Activated CD4-positive, alpha-beta T cell treated with anti-CD3 and anti-CD28 coated beads, Interleukin-2, amount 10 ng/mL, durations not matched to agents 24 days and 14 days (primary cell): ENCODE measurements at regions of chr9 and their contacts with region 1.

Region 1: GRCh38 chr9:86282077-86282978 is at the start of gene ISCA1:
- DNase-seq: peak; percentile 99
- H3K4me3 Mint-ChIP-seq: peak within 1 kb of the TSS; percentile 91
- H3K27ac Mint-ChIP-seq: peak within 1 kb of the TSS; percentile 95
- H3K4me1 Mint-ChIP-seq: peaks cover 33% of the 10 kb centered on the region
- H3K27me3 Mint-ChIP-seq: no peaks in the 10 kb centered on the region
- total RNA-seq, gene ISCA1: 29.4 and 30.1 TPM in 2 replicates

Region 2: GRCh38 chr9:85741875-85742629 is 540.3 kb before region 1 on chr9 and contains the start of gene AGTPBP1:
- intact Hi-C with region 1: loop called (anchors 1 kb)
- DNase-seq: peak; percentile 99
- H3K4me3 Mint-ChIP-seq: peak within 1 kb of the TSS; percentile 88
- H3K27ac Mint-ChIP-seq: peak within 1 kb of the TSS; percentile 94
- H3K4me1 Mint-ChIP-seq: peaks cover 25% of the 10 kb centered on the region
- H3K27me3 Mint-ChIP-seq: peaks cover 8% of the 10 kb centered on the region
- total RNA-seq, gene AGTPBP1: 25.8 and 27.8 TPM in 2 replicates

Region 3: DNA sequence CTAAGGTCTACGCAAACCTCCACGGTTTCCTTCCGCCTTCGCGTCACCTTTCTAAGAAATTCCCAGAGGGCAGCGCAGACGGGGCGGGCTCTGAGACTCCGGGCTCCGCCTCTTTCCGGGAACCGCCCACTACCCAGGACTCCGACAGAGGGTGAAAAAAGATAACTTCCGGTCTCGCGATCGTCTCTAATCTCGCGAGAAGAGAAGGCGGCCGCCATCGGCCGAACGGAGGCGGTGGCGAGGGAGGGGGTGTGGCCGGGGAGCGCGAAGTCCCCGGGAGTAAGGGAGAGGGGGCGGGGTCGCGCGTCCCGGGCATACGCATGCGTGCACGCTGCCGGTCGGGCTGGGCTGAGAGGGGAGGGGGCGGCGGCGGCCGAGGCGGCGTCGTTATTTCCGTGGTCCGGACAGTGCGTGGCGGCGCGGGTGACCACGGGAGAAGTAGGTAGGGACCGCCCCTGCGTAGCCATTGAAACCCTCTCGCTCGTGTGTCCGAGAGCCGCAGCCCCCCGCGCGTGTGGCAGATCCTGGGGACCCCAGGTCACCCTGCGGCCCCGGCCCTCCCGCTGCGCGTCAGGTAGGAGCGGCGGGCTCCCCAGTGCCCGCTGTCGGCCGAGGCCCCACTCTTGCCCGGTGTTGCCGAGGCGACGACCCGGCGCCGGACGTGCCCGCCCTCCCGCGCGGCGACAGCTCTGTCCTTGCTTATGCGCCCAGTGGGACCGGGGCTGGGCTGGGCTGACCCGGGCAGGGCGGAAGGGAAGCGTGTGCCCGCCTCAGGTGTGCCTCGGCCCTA is 341.3 kb before region 1 on chr9 and contains the start of gene NAA35:
- intact Hi-C with region 1: loop called (anchors 1 kb)
- DNase-seq: peak; percentile 100
- H3K4me3 Mint-ChIP-seq: no peak within 1 kb of the TSS
- H3K27ac Mint-ChIP-seq: peak within 1 kb of the TSS; percentile 92
- H3K4me1 Mint-ChIP-seq: peaks cover 11% of the 10 kb centered on the region
- H3K27me3 Mint-ChIP-seq: no peaks in the 10 kb centered on the region
- total RNA-seq, gene NAA35: 28.0 and 29.6 TPM in 2 replicates

Region 4: GRCh38 chr9:86246752-86247161 is 35.6 kb before region 1 on chr9:
- intact Hi-C with region 1: no loop called
- DNase-seq: no peak
- H3K4me3 Mint-ChIP-seq: no peak overlapping the region
- H3K27ac Mint-ChIP-seq: no peak overlapping the region
- H3K4me1 Mint-ChIP-seq: peaks cover 2% of the 10 kb centered on the region
- H3K27me3 Mint-ChIP-seq: no peaks in the 10 kb centered on the region

Region 5: GRCh38 chr9:86303316-86303975 is 21.1 kb after region 1 on chr9:
- intact Hi-C with region 1: loop called (anchors 2 kb)
- DNase-seq: peak; percentile 84
- H3K4me3 Mint-ChIP-seq: peak overlapping the region; percentile 73
- H3K27ac Mint-ChIP-seq: peak overlapping the region; percentile 90
- H3K4me1 Mint-ChIP-seq: peaks cover 28% of the 10 kb centered on the region
- H3K27me3 Mint-ChIP-seq: no peaks in the 10 kb centered on the region

Region 6: DNA sequence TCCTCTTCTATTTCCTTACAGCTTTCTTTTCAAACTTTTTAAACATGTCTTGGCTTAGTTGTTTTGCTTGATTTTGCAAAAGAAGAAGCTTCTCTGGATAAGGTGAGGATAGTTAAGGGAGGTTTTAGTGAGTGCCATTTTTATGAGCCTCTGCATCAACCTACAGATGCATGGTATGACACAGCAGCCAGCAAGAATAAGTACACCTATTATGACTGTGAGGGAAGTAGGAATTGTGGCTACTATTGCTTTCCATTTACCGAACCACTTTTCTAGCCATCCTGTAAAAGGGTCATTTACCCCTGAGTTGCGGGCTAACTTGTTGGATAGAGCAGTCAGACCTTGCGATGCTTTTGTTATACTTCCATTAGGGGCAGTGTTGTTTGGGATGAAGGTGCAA is 78.8 kb after region 1 on chr9:
- intact Hi-C with region 1: no loop called
- DNase-seq: no peak
- H3K4me3 Mint-ChIP-seq: no peak overlapping the region
- H3K27ac Mint-ChIP-seq: no peak overlapping the region
- H3K4me1 Mint-ChIP-seq: no peaks in the 10 kb centered on the region
- H3K27me3 Mint-ChIP-seq: peaks cover 21% of the 10 kb centered on the region

Region 7: GRCh38 chr9:86376016-86376415 is 93.7 kb after region 1 on chr9:
- intact Hi-C with region 1: no loop called
- DNase-seq: no peak
- H3K4me3 Mint-ChIP-seq: no peak overlapping the region
- H3K27ac Mint-ChIP-seq: no peak overlapping the region
- H3K4me1 Mint-ChIP-seq: no peaks in the 10 kb centered on the region
- H3K27me3 Mint-ChIP-seq: peaks cover 22% of the 10 kb centered on the region